ENCODE measurements at regions of chr18 and their contacts with region 1.

Region 1: GRCh38 chr18:38801640-38802039 is 1236.0 kb upstream of the CELF4 start:
- DNase-seq: no peak
- ATAC-seq: no peak
- H3K4me3 ChIP-seq: no peak overlapping the region
- H3K27ac ChIP-seq: no peak overlapping the region
- H3K4me1 ChIP-seq: no peaks in the 10 kb centered on the region
- H3K27me3 ChIP-seq: no peaks in the 10 kb centered on the region
- CTCF ChIP-seq: no peak
- POLR2A ChIP-seq: no peak

Region 2: DNA sequence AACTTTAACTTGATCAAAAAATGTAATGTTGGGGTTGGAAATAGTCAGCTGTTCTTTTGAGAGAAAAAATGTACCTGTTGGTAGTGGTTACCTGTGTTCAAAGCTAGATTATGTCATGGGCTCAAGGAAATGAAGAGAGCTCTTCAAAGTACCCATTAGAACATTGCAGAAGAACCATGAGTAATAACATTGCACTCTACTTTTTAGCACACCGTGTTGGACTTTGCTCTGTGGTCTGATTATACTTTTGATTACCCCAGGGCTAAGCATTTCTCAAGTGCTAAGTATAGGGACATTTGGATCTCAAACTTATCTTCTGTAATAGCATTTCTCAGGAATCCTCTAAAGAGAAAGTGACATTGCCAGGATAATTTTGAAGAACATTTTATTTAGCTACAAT is 113.2 kb before region 1 on chr18:
- in situ Hi-C with region 1: no loop called
- intact Hi-C with region 1: no loop called
- DNase-seq: no peak
- ATAC-seq: no peak
- H3K4me3 ChIP-seq: no peak overlapping the region
- H3K27ac ChIP-seq: no peak overlapping the region
- H3K4me1 ChIP-seq: no peaks in the 10 kb centered on the region
- H3K27me3 ChIP-seq: no peaks in the 10 kb centered on the region
- CTCF ChIP-seq: no peak
- POLR2A ChIP-seq: no peak

Region 3: DNA sequence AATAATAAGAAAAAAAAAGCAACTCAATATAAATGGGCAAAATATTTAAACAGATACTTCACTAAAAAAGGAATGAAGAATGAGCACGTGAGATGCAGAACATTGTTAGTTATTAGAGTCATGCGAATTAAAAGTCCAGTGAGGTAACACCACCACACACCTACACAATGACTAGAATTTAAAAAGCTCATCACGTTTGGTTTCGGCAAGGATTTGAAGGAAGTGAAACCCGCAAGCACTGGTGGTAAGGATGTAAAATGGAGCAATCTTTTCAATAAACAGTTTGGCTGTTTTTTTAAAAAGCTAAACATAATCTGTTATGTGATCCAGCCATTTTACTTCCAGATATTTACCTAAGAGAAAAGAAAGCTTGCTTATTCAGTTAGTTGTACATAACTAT is 54.5 kb before region 1 on chr18:
- in situ Hi-C with region 1: loop called in 1 of 4 experiments (anchors 10 kb)
- intact Hi-C with region 1: no loop called
- DNase-seq: no peak
- ATAC-seq: no peak
- H3K4me3 ChIP-seq: no peak overlapping the region
- H3K27ac ChIP-seq: no peak overlapping the region
- H3K4me1 ChIP-seq: no peaks in the 10 kb centered on the region
- H3K27me3 ChIP-seq: no peaks in the 10 kb centered on the region
- CTCF ChIP-seq: no peak
- POLR2A ChIP-seq: no peak

Measured in gastrocnemius medialis (tissue), 4 donors.